ENCODE measurements at regions of chr12 and their contacts with region 1.

Region 1: GRCh38 chr12:54379401-54380201 is 4.9 kb downstream of the ZNF385A start:
- DNase-seq: peak; percentile 90
- H3K4me3 Mint-ChIP-seq: peak overlapping the region; percentile 22
- H3K27ac Mint-ChIP-seq: no peak overlapping the region
- H3K4me1 Mint-ChIP-seq: peaks cover 25% of the 10 kb centered on the region
- H3K27me3 Mint-ChIP-seq: peaks cover 3% of the 10 kb centered on the region

Region 2: DNA sequence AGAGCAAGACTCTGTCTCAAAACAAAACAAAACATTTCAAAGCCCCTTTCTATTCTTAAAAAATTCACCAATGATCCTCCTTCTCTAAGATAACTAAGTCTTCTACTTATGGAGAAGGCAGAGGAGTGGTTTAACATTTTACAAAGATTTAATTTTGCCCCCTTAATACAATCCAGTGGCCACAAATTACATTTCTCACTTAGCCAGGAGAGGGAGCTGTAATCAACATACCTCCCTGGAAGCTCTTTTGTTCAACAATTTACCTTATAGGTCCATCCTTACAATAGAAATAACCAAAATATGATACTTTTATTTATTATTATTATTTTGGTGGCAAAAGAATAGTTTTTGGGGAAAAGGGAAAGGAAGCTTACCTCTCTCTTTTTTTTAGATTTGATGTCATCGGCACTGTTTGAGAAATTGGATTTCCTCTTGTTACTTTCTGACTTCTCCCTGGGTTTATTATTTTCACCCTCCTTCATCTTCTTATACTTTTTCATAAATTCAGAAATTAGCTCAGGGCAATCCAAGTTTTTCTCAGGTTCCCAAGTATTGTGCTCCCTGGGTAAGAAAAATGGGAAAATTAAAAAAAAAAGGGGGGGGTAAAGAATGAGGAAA is 127.8 kb before region 1 on chr12:
- CTCF ChIA-PET with region 1: interaction called, 12 read pairs
- POLR2A ChIA-PET with region 1: no interaction called
- DNase-seq: no peak
- H3K4me3 Mint-ChIP-seq: no peak overlapping the region
- H3K27ac Mint-ChIP-seq: no peak overlapping the region
- H3K4me1 Mint-ChIP-seq: peaks cover 2% of the 10 kb centered on the region
- H3K27me3 Mint-ChIP-seq: no peaks in the 10 kb centered on the region

Region 3: GRCh38 chr12:54324617-54325441 is 54.8 kb before region 1 on chr12 and contains the start of gene COPZ1:
- CTCF ChIA-PET with region 1: interaction called, 20 read pairs
- POLR2A ChIA-PET with region 1: interaction called, 5 read pairs
- DNase-seq: peak; percentile 96
- H3K4me3 Mint-ChIP-seq: peak within 1 kb of the TSS; percentile 92
- H3K27ac Mint-ChIP-seq: peak within 1 kb of the TSS; percentile 91
- H3K4me1 Mint-ChIP-seq: peaks cover 45% of the 10 kb centered on the region
- H3K27me3 Mint-ChIP-seq: no peaks in the 10 kb centered on the region
- total RNA-seq, gene COPZ1: 126 to 130 TPM

Region 4: GRCh38 chr12:54368709-54369583 is 10.7 kb before region 1 on chr12:
- CTCF ChIA-PET with region 1: interaction called, 18 read pairs
- POLR2A ChIA-PET with region 1: no interaction called
- DNase-seq: peak; percentile 90
- H3K4me3 Mint-ChIP-seq: no peak overlapping the region
- H3K27ac Mint-ChIP-seq: no peak overlapping the region
- H3K4me1 Mint-ChIP-seq: peaks cover 54% of the 10 kb centered on the region
- H3K27me3 Mint-ChIP-seq: peaks cover 16% of the 10 kb centered on the region

Region 5: DNA sequence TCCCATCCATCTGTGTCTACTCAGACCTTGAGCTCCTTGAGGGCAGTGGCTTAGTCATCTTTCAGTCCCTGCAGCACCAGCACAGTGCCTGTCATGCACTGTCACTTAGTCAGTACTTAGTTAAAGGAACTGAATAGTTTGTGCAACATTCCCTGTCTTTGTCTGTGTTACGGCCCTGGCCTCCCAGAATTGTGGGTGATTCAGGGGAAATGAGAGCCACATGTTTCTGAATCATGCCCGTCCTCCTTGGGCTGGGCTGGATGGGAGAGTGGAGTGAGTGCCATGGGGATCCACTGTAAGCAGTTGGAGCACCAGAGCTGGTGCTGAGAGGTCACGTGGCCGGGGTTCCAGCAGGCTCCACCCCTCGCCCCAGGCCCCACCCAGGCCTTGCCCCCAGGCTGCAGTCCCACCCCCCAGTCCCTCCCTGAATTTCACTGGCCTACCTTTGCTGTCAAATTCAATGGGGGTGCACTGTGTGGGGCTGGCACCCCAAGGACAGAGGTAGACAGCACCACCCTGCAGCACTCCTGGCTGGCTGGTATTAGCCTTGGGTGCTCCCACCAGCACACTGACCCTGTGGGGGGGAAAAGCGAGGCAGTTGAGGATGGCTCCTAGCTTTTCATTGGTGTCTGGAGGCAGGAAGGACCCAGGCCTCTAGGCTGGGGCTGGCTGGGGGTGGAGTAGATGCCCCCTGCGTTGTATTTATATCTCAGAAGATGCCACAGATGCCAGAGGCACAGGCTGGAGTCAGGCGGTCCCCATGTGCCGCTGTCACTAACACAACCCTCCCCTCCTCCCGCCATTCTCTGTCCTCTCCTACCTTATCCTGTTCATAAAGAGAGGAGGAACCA is 32.0 kb after region 1 on chr12:
- CTCF ChIA-PET with region 1: interaction called, 11 read pairs
- POLR2A ChIA-PET with region 1: interaction called, 4 read pairs
- DNase-seq: peak; percentile 75
- H3K4me3 Mint-ChIP-seq: peak overlapping the region; percentile 72
- H3K27ac Mint-ChIP-seq: peak overlapping the region; percentile 91
- H3K4me1 Mint-ChIP-seq: peaks cover 68% of the 10 kb centered on the region
- H3K27me3 Mint-ChIP-seq: no peaks in the 10 kb centered on the region

Region 6: GRCh38 chr12:54439521-54440255 is 60.1 kb after region 1 on chr12:
- CTCF ChIA-PET with region 1: interaction called, 28 read pairs
- POLR2A ChIA-PET with region 1: no interaction called
- DNase-seq: no peak
- H3K4me3 Mint-ChIP-seq: no peak overlapping the region
- H3K27ac Mint-ChIP-seq: no peak overlapping the region
- H3K4me1 Mint-ChIP-seq: peaks cover 5% of the 10 kb centered on the region
- H3K27me3 Mint-ChIP-seq: peaks cover 24% of the 10 kb centered on the region

Measured in activated CD4-positive, alpha-beta memory T cell treated with anti-CD3 and anti-CD28 coated beads, Interleukin-2, amount 10 ng/mL, durations not matched to agents 7 days and 5 days (primary cell).